ENCODE measurements at regions of chr6 and their contacts with region 1.

Region 1: GRCh38 chr6:53725791-53726431 is 60.4 kb upstream of the KLHL31 start:
- DNase-seq: peak; percentile 68 to 86 (median 78)
- ATAC-seq: peak in 3 of 4 donors; percentile 88 to 89 (median 89)
- H3K4me3 ChIP-seq: no peak overlapping the region
- H3K27ac ChIP-seq: no peak overlapping the region
- H3K4me1 ChIP-seq: peaks cover 0 to 6% (median under 1%) of the 10 kb centered on the region in 12 donors
- H3K27me3 ChIP-seq: peaks cover 0 to 3% (median 0%) of the 10 kb centered on the region in 9 donors
- CTCF ChIP-seq: peak; percentile 88 to 99 (median 96)
- POLR2A ChIP-seq: no peak

Region 2: DNA sequence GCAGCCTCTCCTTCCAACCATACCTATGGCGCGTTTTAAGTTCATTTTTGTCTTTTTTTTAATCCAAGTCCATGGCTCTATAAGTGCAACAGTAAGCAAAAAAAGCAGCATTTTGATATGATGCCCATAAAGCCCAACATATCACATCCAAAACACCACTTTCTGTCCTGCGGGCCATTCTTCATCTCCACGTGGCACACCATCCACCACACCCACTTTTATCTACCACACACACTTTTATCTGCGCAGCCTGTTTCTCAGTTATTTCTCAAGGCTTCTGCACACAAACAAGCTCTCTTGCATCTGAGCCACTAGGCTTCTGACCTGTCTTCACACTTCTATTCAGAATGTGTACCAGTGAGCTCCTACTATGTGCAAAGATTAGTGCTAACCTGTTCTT is 186.3 kb before region 1 on chr6:
- intact Hi-C with region 1: loop called in 3 of 10 experiments (anchors 5 to 10 kb)
- DNase-seq: no peak
- ATAC-seq: no peak
- H3K4me3 ChIP-seq: no peak overlapping the region
- H3K27ac ChIP-seq: no peak overlapping the region
- H3K4me1 ChIP-seq: peaks cover 0 to 45% (median 21%) of the 10 kb centered on the region in 12 donors
- H3K27me3 ChIP-seq: no peaks in the 10 kb centered on the region
- CTCF ChIP-seq: no peak
- POLR2A ChIP-seq: no peak

Region 3: GRCh38 chr6:53651764-53652401 is 74.0 kb before region 1 on chr6:
- intact Hi-C with region 1: loop called in 2 of 10 experiments (anchors 5 kb)
- DNase-seq: peak; percentile 44 to 83 (median 57)
- ATAC-seq: peak; percentile 42 to 82 (median 78)
- H3K4me3 ChIP-seq: peak overlapping the region; percentile 21 to 66 (median 48)
- H3K27ac ChIP-seq: peak overlapping the region in 5 of 12 donors; percentile 6 to 39 (median 12)
- H3K4me1 ChIP-seq: peaks cover 0 to 62% (median 18%) of the 10 kb centered on the region in 12 donors
- H3K27me3 ChIP-seq: peaks cover 0 to 5% (median 0%) of the 10 kb centered on the region in 9 donors
- CTCF ChIP-seq: peak in 6 of 12 donors; percentile 6 to 35 (median 14)
- POLR2A ChIP-seq: no peak

Region 4: GRCh38 chr6:53956068-53956711 is 230.3 kb after region 1 on chr6:
- intact Hi-C with region 1: loop called in 5 of 10 experiments (anchors 2 to 10 kb)
- DNase-seq: peak; percentile 59 to 75 (median 70)
- ATAC-seq: peak; percentile 93 to 97 (median 96)
- H3K4me3 ChIP-seq: no peak overlapping the region
- H3K27ac ChIP-seq: no peak overlapping the region
- H3K4me1 ChIP-seq: no peaks in the 10 kb centered on the region
- H3K27me3 ChIP-seq: no peaks in the 10 kb centered on the region
- CTCF ChIP-seq: peak; percentile 38 to 81 (median 66)
- POLR2A ChIP-seq: no peak